ENCODE measurements at regions of chr3 and their contacts with region 1.

Region 1: GRCh38 chr3:32733631-32734229 is 48.7 kb downstream of the CNOT10 start:
- DNase-seq: no peak
- H3K4me3 Mint-ChIP-seq: no peak overlapping the region
- H3K27ac Mint-ChIP-seq: no peak overlapping the region
- H3K4me1 Mint-ChIP-seq: no peaks in the 10 kb centered on the region
- H3K27me3 Mint-ChIP-seq: no peaks in the 10 kb centered on the region

Region 2: GRCh38 chr3:32901432-32902409 is 168.0 kb after region 1 on chr3:
- CTCF ChIA-PET with region 1: interaction called, 14 read pairs
- POLR2A ChIA-PET with region 1: no interaction called
- DNase-seq: peak; percentile 47
- H3K4me3 Mint-ChIP-seq: peak overlapping the region; percentile 13
- H3K27ac Mint-ChIP-seq: no peak overlapping the region
- H3K4me1 Mint-ChIP-seq: peaks cover 4% of the 10 kb centered on the region
- H3K27me3 Mint-ChIP-seq: peaks cover 25% of the 10 kb centered on the region

Region 3: DNA sequence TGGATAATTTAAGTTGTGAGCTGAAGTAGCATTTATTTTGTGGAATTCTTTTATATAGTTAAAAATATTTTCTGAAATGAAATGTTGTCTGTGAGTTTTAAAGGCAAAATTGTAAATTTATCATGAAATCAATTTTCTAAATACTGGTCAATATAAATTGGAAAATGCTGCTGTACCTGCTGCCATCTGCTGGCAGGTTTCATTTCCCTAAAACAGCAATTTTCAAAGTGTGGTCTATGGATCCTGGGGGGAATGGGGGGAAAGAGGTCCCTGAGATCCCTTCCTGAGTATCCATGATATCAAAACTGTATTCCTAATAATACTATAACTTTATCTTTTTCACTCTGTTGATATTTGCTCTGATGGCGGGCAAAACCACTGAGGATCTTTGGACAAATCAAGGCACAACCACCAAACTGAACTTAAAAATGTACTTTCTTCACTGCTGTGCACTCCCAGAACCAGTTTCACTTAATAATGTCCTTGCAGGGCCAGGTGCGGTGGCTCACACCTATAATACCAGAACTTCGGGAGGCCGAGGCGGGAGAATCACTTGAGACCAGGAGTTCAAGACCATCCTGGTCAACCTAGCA is 200.5 kb after region 1 on chr3:
- CTCF ChIA-PET with region 1: interaction called, 13 read pairs
- POLR2A ChIA-PET with region 1: no interaction called
- DNase-seq: no peak
- H3K4me3 Mint-ChIP-seq: no peak overlapping the region
- H3K27ac Mint-ChIP-seq: no peak overlapping the region
- H3K4me1 Mint-ChIP-seq: no peaks in the 10 kb centered on the region
- H3K27me3 Mint-ChIP-seq: peaks cover 5% of the 10 kb centered on the region

Region 4: GRCh38 chr3:32989171-32989570 is 255.4 kb after region 1 on chr3:
- CTCF ChIA-PET with region 1: no interaction called
- POLR2A ChIA-PET with region 1: no interaction called
- DNase-seq: no peak
- H3K4me3 Mint-ChIP-seq: peak overlapping the region; percentile 6
- H3K27ac Mint-ChIP-seq: peak overlapping the region; percentile 70
- H3K4me1 Mint-ChIP-seq: peaks cover 67% of the 10 kb centered on the region
- H3K27me3 Mint-ChIP-seq: no peaks in the 10 kb centered on the region

Measured in activated CD4-positive, alpha-beta memory T cell treated with anti-CD3 and anti-CD28 coated beads, Interleukin-2, amount 10 ng/mL, durations not matched to agents 7 days and 5 days (primary cell).